ENCODE measurements at regions of chr12 and their contacts with region 1.

Region 1: DNA sequence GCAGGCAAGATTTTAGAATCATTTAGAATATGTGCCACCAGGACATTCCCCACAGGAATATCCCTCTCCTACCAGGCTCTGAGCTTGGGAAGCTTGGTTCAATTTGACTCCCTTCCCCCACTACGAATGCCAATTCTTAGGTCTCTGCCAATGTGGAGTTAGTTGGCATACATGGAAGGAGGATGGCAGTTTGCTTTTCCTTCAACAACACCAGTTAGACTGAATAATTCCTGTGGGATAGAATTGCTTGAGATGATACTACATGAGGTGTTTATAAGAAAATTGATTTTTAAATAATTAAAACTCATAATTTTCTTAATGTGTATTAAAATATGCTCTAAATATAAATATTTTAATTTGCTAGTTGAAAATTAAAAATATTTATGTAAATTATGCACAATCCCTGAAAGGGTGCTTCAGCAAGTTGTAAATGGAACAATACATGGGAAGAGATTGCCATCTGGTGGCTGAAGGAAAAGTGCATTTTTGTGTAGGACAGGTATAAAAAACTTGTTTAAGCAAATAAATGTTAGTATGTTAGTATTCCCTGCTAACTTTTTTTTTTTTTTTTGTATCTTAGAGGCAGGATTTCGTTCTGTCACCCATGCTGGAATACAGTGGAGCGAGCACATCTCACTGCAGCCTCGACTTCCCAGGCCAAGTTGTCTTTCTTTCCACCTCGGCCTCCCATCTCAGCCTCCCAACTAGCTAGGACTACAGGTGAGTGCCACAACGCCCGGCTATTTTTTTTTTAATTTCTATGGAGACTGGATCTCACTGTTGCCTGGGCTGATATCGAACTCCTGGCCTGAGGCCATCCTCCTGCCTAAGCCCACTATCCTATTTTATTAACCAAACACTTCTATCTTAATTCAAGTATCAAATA is 25.8 kb upstream of the STRAP start:
- H3K4me3 Mint-ChIP-seq: no peak overlapping the region
- H3K27ac Mint-ChIP-seq: no peak overlapping the region
- H3K4me1 Mint-ChIP-seq: no peaks in the 10 kb centered on the region
- H3K27me3 Mint-ChIP-seq: no peaks in the 10 kb centered on the region

Region 2: DNA sequence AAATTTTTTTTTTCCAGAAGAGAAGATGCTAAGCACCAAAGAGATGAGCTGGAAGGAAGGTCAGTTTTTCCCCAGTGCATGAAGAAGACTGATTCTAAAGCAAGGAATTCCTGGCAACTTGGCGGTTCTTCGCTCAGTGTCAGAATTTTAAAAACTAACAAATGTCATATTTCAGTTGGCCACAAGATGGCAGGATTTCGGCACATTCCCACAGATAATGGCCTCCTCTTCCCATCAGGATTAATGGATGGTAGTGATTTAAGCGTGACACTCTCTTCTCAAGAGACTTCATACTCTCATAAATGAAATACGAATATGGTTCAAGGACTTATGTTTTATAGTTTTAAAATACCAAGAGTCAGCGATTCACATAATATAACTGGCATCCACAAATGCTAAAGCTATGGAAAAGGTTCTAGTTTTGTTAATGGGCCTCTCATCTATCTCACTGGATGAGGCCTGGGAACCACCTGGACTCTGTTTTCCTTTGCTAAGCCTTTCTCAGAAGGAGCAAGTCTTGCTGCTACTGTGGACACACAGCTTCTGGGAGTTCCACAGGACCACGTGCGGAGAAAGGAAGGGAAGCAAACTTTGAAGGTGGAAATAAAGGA is 580.1 kb before region 1 on chr12:
- intact Hi-C with region 1: loop called (anchors 5 kb)
- H3K4me3 Mint-ChIP-seq: no peak overlapping the region
- H3K27ac Mint-ChIP-seq: no peak overlapping the region
- H3K4me1 Mint-ChIP-seq: peaks cover 7% of the 10 kb centered on the region
- H3K27me3 Mint-ChIP-seq: peaks cover 29% of the 10 kb centered on the region

Region 3: GRCh38 chr12:15532364-15532977 is 323.9 kb before region 1 on chr12:
- intact Hi-C with region 1: loop called (anchors 5 kb)
- H3K4me3 Mint-ChIP-seq: no peak overlapping the region
- H3K27ac Mint-ChIP-seq: no peak overlapping the region
- H3K4me1 Mint-ChIP-seq: peaks cover 13% of the 10 kb centered on the region
- H3K27me3 Mint-ChIP-seq: no peaks in the 10 kb centered on the region

Region 4: GRCh38 chr12:15590180-15590826 is 266.0 kb before region 1 on chr12:
- intact Hi-C with region 1: loop called (anchors 1 kb)
- H3K4me3 Mint-ChIP-seq: no peak overlapping the region
- H3K27ac Mint-ChIP-seq: no peak overlapping the region
- H3K4me1 Mint-ChIP-seq: peaks cover 14% of the 10 kb centered on the region
- H3K27me3 Mint-ChIP-seq: no peaks in the 10 kb centered on the region

Region 5: GRCh38 chr12:15882118-15882971 is 26.0 kb after region 1 on chr12 and contains the start of gene STRAP:
- intact Hi-C with region 1: no loop called
- H3K4me3 Mint-ChIP-seq: peak within 1 kb of the TSS; percentile 86
- H3K27ac Mint-ChIP-seq: peak within 1 kb of the TSS; percentile 98
- H3K4me1 Mint-ChIP-seq: peaks cover 19% of the 10 kb centered on the region
- H3K27me3 Mint-ChIP-seq: no peaks in the 10 kb centered on the region

Region 6: GRCh38 chr12:15899282-15899870 is 43.0 kb after region 1 on chr12:
- intact Hi-C with region 1: loop called (anchors 1 kb)
- H3K4me3 Mint-ChIP-seq: no peak overlapping the region
- H3K27ac Mint-ChIP-seq: no peak overlapping the region
- H3K4me1 Mint-ChIP-seq: no peaks in the 10 kb centered on the region
- H3K27me3 Mint-ChIP-seq: no peaks in the 10 kb centered on the region